ENCODE measurements at regions of chr17 and their contacts with region 1.

Region 1: DNA sequence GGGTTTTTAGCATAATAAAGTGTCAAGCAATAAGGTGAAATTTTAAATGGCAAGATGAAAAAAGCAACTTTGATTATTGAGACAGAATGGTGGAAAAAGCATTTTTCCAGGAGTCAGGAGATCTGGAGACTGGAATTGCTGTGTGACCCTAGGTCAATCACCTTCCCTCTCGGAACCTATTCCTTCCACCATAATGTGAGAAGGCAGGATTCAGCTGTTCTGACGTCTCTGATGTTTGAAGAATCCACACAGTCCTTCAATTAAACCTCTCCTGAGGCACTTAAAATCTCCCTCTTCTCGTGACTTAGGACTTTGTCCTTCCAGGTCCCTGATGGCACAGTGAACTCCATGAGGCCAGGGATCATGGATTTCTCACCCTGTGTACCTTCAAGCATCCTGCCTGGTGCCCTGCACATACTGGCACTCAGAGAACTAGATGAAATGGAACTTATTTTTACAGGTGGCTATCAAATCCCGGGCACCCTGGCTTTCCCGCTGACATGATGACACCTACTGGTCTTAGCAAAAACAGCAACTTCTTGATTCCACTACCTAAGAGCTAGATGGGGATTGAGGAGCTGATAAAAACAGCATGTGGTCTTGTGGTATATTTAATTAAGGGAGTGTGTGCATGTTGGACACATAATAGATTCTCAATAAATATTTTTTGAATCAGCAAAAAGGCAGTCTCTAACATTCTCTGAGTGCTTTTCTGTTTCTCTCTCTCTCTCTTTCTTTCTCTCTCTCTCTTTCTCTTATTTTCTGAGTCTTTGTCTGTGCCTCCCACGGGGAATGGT is 2.3 kb upstream of the CCDC182 start:
- DNase-seq: peak; percentile 53 to 64 (median 60)
- ATAC-seq: peak; percentile 85
- H3K4me3 ChIP-seq: no peak overlapping the region
- H3K27ac ChIP-seq: no peak overlapping the region
- H3K4me1 ChIP-seq: no peaks in the 10 kb centered on the region
- H3K27me3 ChIP-seq: peaks cover 38 to 55% of the 10 kb centered on the region in 2 experiments
- CTCF ChIP-seq: peak; percentile 71 to 85 (median 77)
- EP300 ChIP-seq: no peak
- POLR2A ChIP-seq: no peak
- RAD21 ChIP-seq: peak; percentile 70 to 82

Region 2: GRCh38 chr17:57092171-57092570 is 655.2 kb before region 1 on chr17:
- CTCF ChIA-PET with region 1: no interaction called
- POLR2A ChIA-PET with region 1: no interaction called
- in situ Hi-C with region 1: no loop called
- intact Hi-C with region 1: no loop called
- DNase-seq: no peak
- ATAC-seq: no peak
- H3K4me3 ChIP-seq: no peak overlapping the region
- H3K27ac ChIP-seq: no peak overlapping the region
- H3K4me1 ChIP-seq: peaks cover 16 to 24% of the 10 kb centered on the region in 2 experiments; a peak in 4 of 5 replicates
- H3K27me3 ChIP-seq: no peaks in the 10 kb centered on the region
- CTCF ChIP-seq: no peak
- EP300 ChIP-seq: no peak
- POLR2A ChIP-seq: no peak
- RAD21 ChIP-seq: no peak

Region 3: GRCh38 chr17:57121338-57122042 is 625.9 kb before region 1 on chr17:
- CTCF ChIA-PET with region 1: interaction called, 8 read pairs
- POLR2A ChIA-PET with region 1: no interaction called
- in situ Hi-C with region 1: loop called (anchors 5 kb)
- intact Hi-C with region 1: loop called (anchors 5 kb)
- DNase-seq: peak; percentile 54 to 64 (median 57)
- ATAC-seq: peak; percentile 90
- H3K4me3 ChIP-seq: no peak overlapping the region
- H3K27ac ChIP-seq: no peak overlapping the region
- H3K4me1 ChIP-seq: peaks cover 0 to 3% of the 10 kb centered on the region in 2 experiments; a peak in 1 of 5 replicates
- H3K27me3 ChIP-seq: no peaks in the 10 kb centered on the region
- CTCF ChIP-seq: peak; percentile 62 to 75 (median 69)
- EP300 ChIP-seq: no peak
- POLR2A ChIP-seq: no peak
- RAD21 ChIP-seq: peak; percentile 47 to 61

Region 4: GRCh38 chr17:57597531-57598453 is 149.6 kb before region 1 on chr17:
- CTCF ChIA-PET with region 1: interaction called, 7 read pairs
- POLR2A ChIA-PET with region 1: no interaction called
- in situ Hi-C with region 1: no loop called
- intact Hi-C with region 1: loop called (anchors 10 kb)
- DNase-seq: peak; percentile 50 to 61 (median 60)
- ATAC-seq: peak; percentile 80
- H3K4me3 ChIP-seq: no peak overlapping the region
- H3K27ac ChIP-seq: no peak overlapping the region
- H3K4me1 ChIP-seq: no peaks in the 10 kb centered on the region
- H3K27me3 ChIP-seq: no peaks in the 10 kb centered on the region
- CTCF ChIP-seq: peak; percentile 67 to 81 (median 76)
- EP300 ChIP-seq: no peak
- POLR2A ChIP-seq: no peak
- RAD21 ChIP-seq: peak; percentile 46 to 75; a peak in 3 of 4 replicates

Region 5: DNA sequence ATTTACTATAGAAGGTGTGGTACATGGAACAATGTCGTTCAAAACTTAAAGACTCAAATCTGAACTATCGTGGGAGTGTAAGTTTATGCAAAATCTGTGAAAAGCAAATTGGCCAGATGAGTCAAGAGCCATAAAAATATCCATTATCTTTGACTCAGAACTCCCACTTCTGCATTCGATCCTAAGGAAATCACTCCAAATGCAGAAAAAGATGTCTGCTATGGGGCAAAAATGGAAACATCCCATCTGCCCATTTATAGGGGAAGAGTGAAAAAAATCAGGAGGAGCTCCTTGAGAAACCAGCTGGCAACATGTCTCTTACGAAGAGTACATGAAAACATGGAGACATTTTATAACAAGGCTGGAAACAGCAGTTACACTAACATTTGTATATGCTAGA is 41.3 kb after region 1 on chr17:
- CTCF ChIA-PET with region 1: no interaction called
- POLR2A ChIA-PET with region 1: no interaction called
- in situ Hi-C with region 1: no loop called
- intact Hi-C with region 1: no loop called
- DNase-seq: no peak
- ATAC-seq: no peak
- H3K4me3 ChIP-seq: no peak overlapping the region
- H3K27ac ChIP-seq: no peak overlapping the region
- H3K4me1 ChIP-seq: no peaks in the 10 kb centered on the region
- H3K27me3 ChIP-seq: peaks cover 21 to 47% of the 10 kb centered on the region in 2 experiments
- CTCF ChIP-seq: no peak
- EP300 ChIP-seq: no peak
- POLR2A ChIP-seq: no peak
- RAD21 ChIP-seq: no peak

Region 6: GRCh38 chr17:58219001-58219788 is 471.8 kb after region 1 on chr17 and contains the start of gene MKS1:
- CTCF ChIA-PET with region 1: no interaction called
- POLR2A ChIA-PET with region 1: no interaction called
- in situ Hi-C with region 1: no loop called
- intact Hi-C with region 1: no loop called
- DNase-seq: peak; percentile 97 to 98 (median 98)
- ATAC-seq: peak; percentile 100
- H3K4me3 ChIP-seq: peak within 1 kb of the TSS; percentile 67
- H3K27ac ChIP-seq: peak within 1 kb of the TSS; percentile 72
- H3K4me1 ChIP-seq: peaks cover 12 to 14% of the 10 kb centered on the region in 2 experiments
- H3K27me3 ChIP-seq: no peaks in the 10 kb centered on the region
- CTCF ChIP-seq: peak; percentile 58 to 80 (median 66)
- EP300 ChIP-seq: no peak
- POLR2A ChIP-seq: peak; percentile 91
- RAD21 ChIP-seq: no peak
- polyA plus RNA-seq, gene MKS1: 16.3 to 27.8 TPM

Measured in K562 (cell line).